ENCODE measurements at regions of chr16 and their contacts with region 1.

Region 1: GRCh38 chr16:58336332-58337089 is 41.7 kb upstream of the PRSS54 start:
- DNase-seq: peak; percentile 72 to 84 (median 81)
- ATAC-seq: peak; percentile 97 to 100 (median 98)
- H3K4me3 ChIP-seq: peak overlapping the region; percentile 6 to 34 (median 27)
- H3K27ac ChIP-seq: no peak overlapping the region
- H3K4me1 ChIP-seq: peaks cover 0 to 6% (median 0%) of the 10 kb centered on the region in 4 donors
- H3K27me3 ChIP-seq: no peaks in the 10 kb centered on the region
- CTCF ChIP-seq: peak; percentile 85 to 96 (median 96)
- POLR2A ChIP-seq: no peak

Region 2: DNA sequence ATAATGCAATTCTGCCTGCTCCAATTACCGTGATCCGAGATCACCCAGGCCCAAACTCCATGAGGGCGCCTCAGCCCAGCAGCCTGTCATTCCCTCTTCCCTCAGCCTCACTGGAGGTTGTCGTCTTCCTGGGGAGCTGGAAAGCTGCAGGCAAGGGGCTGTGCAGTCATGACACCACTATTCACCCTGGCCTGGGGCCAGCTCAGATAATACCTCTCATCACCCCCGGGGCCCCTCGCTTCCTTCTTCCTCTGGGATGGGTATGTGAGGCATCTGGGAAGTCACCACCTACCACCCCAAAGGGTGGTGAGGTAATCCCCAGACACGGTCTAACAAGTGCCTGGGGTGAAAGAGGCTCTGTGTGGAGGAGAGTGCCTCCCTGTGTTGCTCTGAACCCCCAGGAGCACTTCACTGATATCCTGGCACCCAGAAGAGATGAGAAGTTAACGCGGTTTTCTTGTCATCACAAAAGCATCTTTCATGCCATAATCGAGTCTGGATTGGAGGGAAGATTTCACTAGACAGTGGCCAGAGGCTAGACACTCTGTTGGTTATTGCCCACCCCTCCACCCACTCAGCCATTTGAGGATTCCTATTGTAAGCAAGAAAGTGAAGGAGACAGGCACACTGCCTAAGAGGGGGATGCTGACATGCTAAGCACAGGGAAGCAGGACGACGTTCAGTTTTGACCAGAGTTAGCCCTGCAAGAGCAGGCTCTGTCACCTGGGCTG is 225.8 kb before region 1 on chr16:
- intact Hi-C with region 1: no loop called
- DNase-seq: peak in 1 of 3 donors; percentile 43
- ATAC-seq: peak in 1 of 4 donors; percentile 28
- H3K4me3 ChIP-seq: no peak overlapping the region
- H3K27ac ChIP-seq: no peak overlapping the region
- H3K4me1 ChIP-seq: no peaks in the 10 kb centered on the region
- H3K27me3 ChIP-seq: no peaks in the 10 kb centered on the region
- CTCF ChIP-seq: no peak
- POLR2A ChIP-seq: no peak

Region 3: GRCh38 chr16:58176608-58177352 is 159.7 kb before region 1 on chr16:
- intact Hi-C with region 1: no loop called
- DNase-seq: no peak
- ATAC-seq: no peak
- H3K4me3 ChIP-seq: no peak overlapping the region
- H3K27ac ChIP-seq: no peak overlapping the region
- H3K4me1 ChIP-seq: no peaks in the 10 kb centered on the region
- H3K27me3 ChIP-seq: no peaks in the 10 kb centered on the region
- CTCF ChIP-seq: no peak
- POLR2A ChIP-seq: no peak

Region 4: DNA sequence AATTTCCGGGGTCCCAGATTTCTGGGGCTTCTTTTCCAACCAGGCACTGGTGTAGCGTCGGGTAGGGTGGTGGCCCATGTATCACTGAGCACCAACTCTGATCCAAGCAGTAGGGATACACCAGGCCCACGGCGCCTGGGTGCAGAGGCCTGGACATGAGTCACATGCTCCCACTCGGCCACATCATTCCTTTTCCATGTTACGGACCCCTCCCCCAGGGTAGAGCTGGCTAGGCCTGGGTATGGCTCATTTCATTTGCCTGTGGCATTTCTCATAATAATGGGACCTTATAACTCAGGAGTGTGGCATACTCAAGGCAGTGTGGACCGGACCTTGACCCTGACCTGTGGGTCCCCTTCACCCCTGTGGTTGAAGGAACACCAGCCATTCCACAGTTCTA is 145.4 kb after region 1 on chr16:
- intact Hi-C with region 1: loop called (anchors 5 kb)
- DNase-seq: no peak
- ATAC-seq: peak in 1 of 4 donors; percentile 24
- H3K4me3 ChIP-seq: no peak overlapping the region
- H3K27ac ChIP-seq: no peak overlapping the region
- H3K4me1 ChIP-seq: no peaks in the 10 kb centered on the region
- H3K27me3 ChIP-seq: no peaks in the 10 kb centered on the region
- CTCF ChIP-seq: no peak
- POLR2A ChIP-seq: no peak

Region 5: DNA sequence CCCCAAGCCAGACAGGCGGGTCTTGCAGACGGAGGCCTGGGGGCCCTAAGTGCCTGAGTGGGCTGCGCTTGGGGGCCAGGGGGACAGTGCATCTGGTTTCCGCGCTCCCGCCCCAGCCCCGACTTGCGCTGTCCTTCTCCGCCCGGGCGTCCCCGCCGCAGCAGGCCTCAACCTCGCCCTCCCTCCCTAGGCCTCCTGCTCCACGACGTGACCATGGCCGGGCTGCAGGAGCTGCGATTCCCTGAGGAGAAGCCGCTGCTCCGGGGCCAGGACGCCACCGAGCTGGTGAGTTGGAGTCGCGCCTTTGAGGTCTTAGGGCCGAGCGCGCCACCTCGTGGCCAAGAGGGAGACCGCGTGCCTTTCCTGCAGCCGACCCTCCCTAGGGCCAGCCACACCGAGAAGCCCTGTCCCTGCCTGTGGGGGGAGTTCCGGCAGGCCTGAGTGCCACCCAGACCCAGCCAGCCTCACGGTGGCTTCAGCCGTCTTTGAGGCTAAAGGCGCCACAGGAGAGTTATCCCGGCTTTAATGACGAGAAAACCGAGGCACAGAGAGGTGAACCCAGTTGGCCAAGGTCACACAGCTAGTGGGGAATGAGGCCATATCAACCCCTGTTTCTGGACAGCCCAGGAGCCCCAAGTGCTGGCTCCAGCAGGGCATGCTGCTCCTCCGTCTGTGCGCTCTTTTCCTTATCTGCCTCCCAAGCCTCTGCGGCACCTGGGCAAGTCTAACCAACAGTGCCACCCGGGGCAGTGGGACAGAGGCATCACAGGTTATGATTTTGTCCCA is 151.2 kb after region 1 on chr16:
- intact Hi-C with region 1: loop called (anchors 5 kb)
- DNase-seq: peak; percentile 82 to 86 (median 83)
- ATAC-seq: peak; percentile 94 to 99 (median 98)
- H3K4me3 ChIP-seq: no peak overlapping the region
- H3K27ac ChIP-seq: no peak overlapping the region
- H3K4me1 ChIP-seq: peaks cover 0 to 6% (median 0%) of the 10 kb centered on the region in 4 donors
- H3K27me3 ChIP-seq: no peaks in the 10 kb centered on the region
- CTCF ChIP-seq: peak; percentile 82 to 91 (median 90)
- POLR2A ChIP-seq: no peak